ENCODE measurements at regions of chr2 and their contacts with region 1.

Region 1: DNA sequence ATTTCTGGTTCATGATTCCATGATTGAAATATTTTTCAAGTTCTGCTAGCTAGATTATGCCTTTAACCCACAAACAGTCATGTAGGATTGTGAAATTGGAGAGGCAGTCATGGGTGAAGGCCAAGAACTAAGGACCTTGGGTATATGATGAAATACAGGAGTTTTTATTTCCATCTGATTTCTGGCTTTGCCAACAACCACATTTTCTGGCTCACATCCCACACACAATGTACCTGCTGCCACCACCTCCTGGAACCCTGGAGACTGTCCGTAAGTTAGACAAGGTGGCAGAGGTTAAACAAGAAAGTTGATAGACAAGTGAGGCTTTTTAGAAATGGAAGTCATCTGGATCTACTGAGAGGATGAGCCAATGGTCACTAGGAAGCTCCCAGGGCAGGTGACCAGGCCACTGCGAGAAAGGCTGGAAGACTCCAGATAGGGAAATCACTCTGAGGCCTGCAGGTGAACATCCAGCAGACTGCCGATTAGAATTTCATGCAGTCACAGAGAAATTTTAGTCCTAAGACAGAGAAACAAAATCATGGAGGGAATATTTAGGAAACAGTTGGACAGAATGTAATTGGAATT is 402.0 kb downstream of the ALK start:
- DNase-seq: peak; percentile 84
- ATAC-seq: peak; percentile 7; the same call in 1 of the 2 replicates
- H3K4me3 ChIP-seq: no peak overlapping the region
- H3K27ac ChIP-seq: peak overlapping the region; percentile 56
- H3K4me1 ChIP-seq: peaks cover 30% of the 10 kb centered on the region
- H3K27me3 ChIP-seq: no peaks in the 10 kb centered on the region
- CTCF ChIP-seq: no peak
- POLR2A ChIP-seq: no peak
- RAD21 ChIP-seq: no peak

Region 2: GRCh38 chr2:29463181-29463900 is 56.1 kb before region 1 on chr2:
- CTCF ChIA-PET with region 1: no interaction called
- POLR2A ChIA-PET with region 1: no interaction called
- dilution Hi-C with region 1: no loop called
- in situ Hi-C with region 1: no loop called
- intact Hi-C with region 1: loop called (anchors 5 kb)
- DNase-seq: peak; percentile 88
- ATAC-seq: peak; percentile 70
- H3K4me3 ChIP-seq: no peak overlapping the region
- H3K27ac ChIP-seq: peak overlapping the region; percentile 86
- H3K4me1 ChIP-seq: peaks cover 6% of the 10 kb centered on the region
- H3K27me3 ChIP-seq: no peaks in the 10 kb centered on the region
- CTCF ChIP-seq: no peak
- POLR2A ChIP-seq: no peak
- RAD21 ChIP-seq: no peak

Region 3: DNA sequence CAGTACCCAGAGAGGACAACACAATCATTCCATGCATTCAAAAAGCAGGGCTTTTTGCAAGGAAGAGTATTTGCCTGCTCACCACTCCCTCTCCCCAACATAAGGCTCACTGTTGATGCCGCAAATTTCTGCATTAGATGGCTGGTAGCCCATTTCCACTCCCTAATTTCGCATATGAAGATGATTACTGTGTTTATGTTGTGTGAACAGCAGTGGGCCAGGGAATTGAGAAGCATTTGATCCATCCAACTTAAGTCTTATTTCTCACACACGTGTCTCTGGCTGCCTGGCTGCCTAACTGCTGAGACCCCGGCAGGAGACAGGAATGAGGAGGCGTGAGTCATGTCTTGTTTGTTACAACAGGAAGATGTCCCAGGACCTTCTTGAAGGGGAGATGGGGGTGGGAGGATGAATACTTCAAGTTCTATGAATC is 107.9 kb after region 1 on chr2:
- CTCF ChIA-PET with region 1: no interaction called
- POLR2A ChIA-PET with region 1: no interaction called
- dilution Hi-C with region 1: no loop called
- in situ Hi-C with region 1: no loop called
- intact Hi-C with region 1: loop called (anchors 5 kb)
- DNase-seq: peak; percentile 91
- ATAC-seq: peak; percentile 61
- H3K4me3 ChIP-seq: no peak overlapping the region
- H3K27ac ChIP-seq: no peak overlapping the region; the same call in 1 of the 2 replicates
- H3K4me1 ChIP-seq: peaks cover 11% of the 10 kb centered on the region
- H3K27me3 ChIP-seq: no peaks in the 10 kb centered on the region
- CTCF ChIP-seq: no peak
- POLR2A ChIP-seq: no peak
- RAD21 ChIP-seq: no peak